ENCODE measurements at regions of chr3 and their contacts with region 1.

Region 1: GRCh38 chr3:10758304-10759061 is 57.5 kb upstream of the SLC6A11 start:
- DNase-seq: no peak
- ATAC-seq: peak; percentile 91
- H3K4me3 ChIP-seq: no peak overlapping the region
- H3K27ac ChIP-seq: no peak overlapping the region
- H3K4me1 ChIP-seq: no peaks in the 10 kb centered on the region
- H3K27me3 ChIP-seq: peaks cover 21% of the 10 kb centered on the region
- CTCF ChIP-seq: peak; percentile 70

Region 2: DNA sequence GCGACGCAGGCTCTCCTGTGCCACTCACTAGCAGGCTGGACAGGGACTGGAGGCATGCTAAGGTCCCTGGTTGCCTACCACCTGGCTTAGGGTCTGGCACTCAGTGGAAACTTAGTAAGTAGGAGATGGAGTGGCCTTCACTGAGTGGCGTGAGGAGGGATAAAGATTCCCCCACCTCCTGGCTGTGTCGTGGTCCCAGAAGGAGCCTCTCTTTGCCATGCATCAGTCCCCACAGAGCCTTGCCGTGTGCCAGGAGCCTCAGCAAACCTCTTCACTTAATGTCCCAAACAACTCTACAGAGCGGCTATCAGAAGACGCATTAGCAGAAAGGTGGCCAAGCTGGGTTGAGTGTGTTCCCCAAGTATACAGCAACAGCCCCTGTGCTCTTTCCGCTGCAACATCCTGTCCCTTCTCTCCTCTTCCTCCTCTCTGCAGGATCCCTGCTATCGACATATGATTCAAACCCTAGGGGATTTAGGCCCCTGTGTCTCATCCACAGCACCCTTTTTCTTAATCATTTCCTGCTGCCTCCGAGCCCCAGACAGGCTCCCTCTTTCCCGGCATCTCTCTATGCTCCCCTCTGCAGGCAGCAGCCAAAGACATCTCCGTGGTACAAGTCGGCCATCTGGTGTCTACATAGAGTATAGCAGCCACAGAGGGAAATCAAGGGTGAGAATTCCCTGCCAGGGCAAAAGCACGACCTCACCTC is 300.8 kb after region 1 on chr3:
- intact Hi-C with region 1: loop called (anchors 5 kb)
- DNase-seq: no peak
- ATAC-seq: peak; percentile 88
- H3K4me3 ChIP-seq: no peak overlapping the region
- H3K27ac ChIP-seq: no peak overlapping the region
- H3K4me1 ChIP-seq: peaks cover 4% of the 10 kb centered on the region
- H3K27me3 ChIP-seq: peaks cover 13% of the 10 kb centered on the region
- CTCF ChIP-seq: peak; percentile 78